Right cardiac atrium (tissue), 5 donors: ENCODE measurements at regions of chr1 and their contacts with region 1.

Region 1: DNA sequence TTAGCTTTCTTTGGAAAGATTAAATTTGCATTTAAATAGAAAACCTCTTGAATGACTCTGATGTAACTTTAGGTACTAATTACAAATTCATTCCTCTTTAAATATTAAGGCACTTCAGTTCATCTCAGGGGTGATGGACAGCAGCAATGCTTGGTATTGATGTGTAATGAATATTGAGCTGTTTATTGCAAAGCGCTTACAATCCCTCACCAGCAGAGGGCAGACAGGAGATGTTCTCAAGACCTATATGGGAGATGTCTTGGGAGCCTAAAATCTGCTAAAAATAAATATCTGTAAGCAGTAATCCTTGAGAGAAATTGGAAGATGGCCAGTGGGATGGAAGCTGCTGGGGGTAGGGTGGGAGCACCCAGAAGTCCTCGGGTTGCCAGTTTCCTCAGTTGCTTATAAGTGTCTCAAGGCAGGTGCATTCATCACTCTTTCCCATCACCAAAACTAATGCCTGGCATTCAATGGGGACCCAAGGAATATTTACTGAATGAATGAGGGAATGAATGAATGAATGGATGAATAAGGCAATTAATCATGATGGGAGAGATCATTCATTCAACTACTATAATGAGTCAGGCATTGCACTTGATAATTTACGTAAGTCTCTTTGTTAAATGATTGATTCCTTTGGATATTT is 2.3 kb downstream of the KLHDC8A start:
- DNase-seq: peak in 2 of 3 donors; percentile 34 to 68
- ATAC-seq: peak; percentile 40 to 60
- H3K4me3 ChIP-seq: no peak overlapping the region
- H3K27ac ChIP-seq: no peak overlapping the region
- H3K4me1 ChIP-seq: no peaks in the 10 kb centered on the region
- H3K27me3 ChIP-seq: no peaks in the 10 kb centered on the region

Region 2: DNA sequence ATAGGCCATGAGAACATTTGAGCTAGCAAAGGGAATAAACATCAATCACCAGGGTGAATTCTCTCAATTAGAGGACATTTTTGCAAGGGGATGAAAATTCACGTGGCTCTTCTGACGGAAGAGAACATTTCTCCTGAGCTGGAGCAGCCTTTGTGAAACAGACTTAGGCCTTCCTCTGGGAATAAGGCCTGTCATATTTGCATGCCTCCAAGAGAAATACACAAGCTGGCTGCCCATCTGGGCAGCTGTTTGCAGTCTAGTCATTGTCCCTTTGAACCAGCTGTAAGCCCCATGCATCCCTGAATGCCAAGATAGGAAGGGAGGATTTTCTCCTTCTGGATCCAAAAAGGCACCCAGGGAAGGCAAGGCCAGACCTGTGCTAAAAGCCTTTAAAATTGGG is 61.9 kb after region 1 on chr1:
- intact Hi-C with region 1: loop called in 1 of 4 experiments (anchors 10 kb)
- DNase-seq: no peak
- ATAC-seq: peak; percentile 25 to 36
- H3K4me3 ChIP-seq: no peak overlapping the region
- H3K27ac ChIP-seq: no peak overlapping the region
- H3K4me1 ChIP-seq: no peaks in the 10 kb centered on the region
- H3K27me3 ChIP-seq: no peaks in the 10 kb centered on the region